OCI-LY7 (cell line): ENCODE measurements at regions of chr18 and their contacts with region 1.

Region 1: GRCh38 chr18:50356036-50356945 is 18.6 kb upstream of the SKA1 start:
- DNase-seq: peak; percentile 64
- H3K4me3 ChIP-seq: no peak overlapping the region
- H3K27ac ChIP-seq: peak overlapping the region; percentile 45
- H3K4me1 ChIP-seq: peaks cover 16% of the 10 kb centered on the region
- CTCF ChIP-seq: peak; percentile 53

Region 2: DNA sequence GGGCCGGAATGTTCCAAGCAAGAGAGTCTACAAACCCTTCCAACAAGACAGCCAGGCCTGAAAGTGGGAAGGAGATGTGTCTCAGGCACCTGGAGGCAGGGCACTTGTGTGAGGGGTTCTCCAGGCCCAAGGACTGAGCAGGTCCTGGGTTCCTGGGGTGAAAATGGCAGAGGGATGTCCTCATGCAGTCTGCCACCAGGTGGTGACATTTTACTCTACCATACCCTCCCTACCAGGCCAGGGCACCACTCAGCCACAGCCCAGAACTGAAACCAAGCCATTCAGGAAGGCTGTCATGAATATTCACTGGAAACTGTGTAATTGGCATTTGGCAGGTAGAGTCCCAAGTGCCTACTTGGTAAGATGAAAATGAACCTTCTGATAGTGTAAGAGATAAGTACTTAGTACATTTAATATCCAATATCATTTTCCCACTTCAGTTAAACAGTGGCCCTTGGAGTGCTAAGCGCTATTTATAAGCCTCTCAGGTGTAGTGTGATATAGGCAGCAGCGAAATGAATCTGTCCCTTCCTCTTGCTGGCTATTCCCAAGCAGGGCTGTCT is 346.4 kb before region 1 on chr18:
- CTCF ChIA-PET with region 1: no interaction called
- POLR2A ChIA-PET with region 1: no interaction called
- intact Hi-C with region 1: loop called (anchors 5 kb)
- DNase-seq: peak; percentile 36
- H3K4me3 ChIP-seq: no peak overlapping the region
- H3K27ac ChIP-seq: no peak overlapping the region
- H3K4me1 ChIP-seq: no peaks in the 10 kb centered on the region
- CTCF ChIP-seq: peak; percentile 65

Region 3: DNA sequence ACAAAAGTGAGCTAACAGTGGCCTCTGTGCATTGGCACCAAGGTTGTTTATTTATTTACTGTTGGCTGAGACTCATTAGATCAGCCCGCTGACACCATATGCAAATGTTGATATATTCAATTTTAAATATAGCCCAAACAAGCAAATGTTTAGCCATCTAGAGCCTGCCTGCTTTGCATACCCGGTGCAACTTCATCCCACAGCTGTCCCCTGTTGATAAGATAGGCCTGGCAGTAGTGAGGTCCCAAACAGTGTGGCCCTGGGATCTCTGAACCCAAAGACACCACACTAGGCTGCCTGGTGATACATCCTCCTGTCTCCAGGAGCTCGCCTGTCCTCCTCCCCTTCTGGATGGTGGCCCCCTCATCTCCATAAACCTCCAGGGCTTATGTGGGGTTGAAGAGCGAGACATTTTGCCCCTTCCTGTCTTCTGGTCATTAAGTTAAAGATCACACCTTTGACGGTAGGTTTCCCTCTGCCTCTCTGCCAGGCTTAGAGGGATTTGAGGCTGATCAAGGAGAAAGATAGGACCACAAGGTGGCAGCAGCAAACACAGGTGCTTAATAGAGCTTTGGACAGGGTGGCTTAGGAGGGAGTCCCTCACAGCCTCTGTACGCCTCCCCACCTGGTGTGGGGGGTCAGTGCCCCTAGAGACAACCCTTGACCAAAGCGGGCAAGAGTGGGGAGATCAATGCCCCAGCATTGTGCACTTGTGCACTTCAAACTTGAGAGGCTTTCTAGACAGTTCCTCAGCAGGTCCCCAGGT is 137.7 kb before region 1 on chr18:
- CTCF ChIA-PET with region 1: interaction called, 6 read pairs
- POLR2A ChIA-PET with region 1: interaction called, 4 read pairs
- intact Hi-C with region 1: loop called (anchors 1 kb)
- DNase-seq: peak; percentile 54
- H3K4me3 ChIP-seq: no peak overlapping the region
- H3K27ac ChIP-seq: no peak overlapping the region
- H3K4me1 ChIP-seq: no peaks in the 10 kb centered on the region
- CTCF ChIP-seq: peak; percentile 67

Region 4: DNA sequence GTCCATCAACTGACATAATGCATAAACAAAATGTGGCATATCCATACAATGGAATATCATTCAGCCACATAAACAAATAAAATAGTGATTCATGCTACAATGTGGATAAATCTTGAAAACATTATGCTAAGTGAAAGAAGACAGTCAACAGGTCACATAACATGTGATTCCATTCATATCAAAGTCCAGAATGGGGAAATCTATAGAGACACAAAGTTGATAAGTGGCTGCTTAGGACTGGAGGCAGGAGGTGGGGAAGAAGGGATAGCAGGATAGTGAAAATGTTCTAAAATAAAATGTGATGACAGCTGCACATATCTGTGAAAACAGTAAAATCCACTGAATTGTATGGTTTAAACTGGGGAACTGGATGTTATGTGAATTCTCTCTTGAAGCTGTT is 108.7 kb before region 1 on chr18:
- CTCF ChIA-PET with region 1: no interaction called
- POLR2A ChIA-PET with region 1: no interaction called
- intact Hi-C with region 1: no loop called
- DNase-seq: no peak
- H3K4me3 ChIP-seq: no peak overlapping the region
- H3K27ac ChIP-seq: no peak overlapping the region
- H3K4me1 ChIP-seq: no peaks in the 10 kb centered on the region
- CTCF ChIP-seq: no peak

Region 5: DNA sequence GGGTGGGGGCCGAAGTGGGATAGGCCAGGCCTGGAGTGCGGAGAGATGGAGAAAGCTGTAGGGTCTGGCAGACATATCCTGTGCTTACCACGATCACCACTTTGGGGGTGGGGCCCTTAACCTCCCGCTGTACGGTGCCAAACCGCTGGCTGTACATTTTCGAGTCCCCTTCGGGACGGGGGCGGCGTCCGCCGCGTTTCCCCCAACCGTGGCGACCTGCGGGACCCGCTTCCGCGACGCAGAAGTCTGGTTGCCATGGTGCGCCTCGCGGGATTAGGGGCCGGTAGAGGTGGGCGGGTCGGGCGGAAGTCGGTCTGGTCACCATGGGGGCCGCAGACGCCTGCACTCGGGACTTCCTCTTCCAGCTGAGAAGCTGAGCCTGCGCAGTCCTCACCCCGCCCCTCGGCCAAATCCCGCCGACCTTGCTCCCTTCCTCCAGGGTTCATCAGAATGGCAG is 90.0 kb before region 1 on chr18 and contains the start of gene CFAP53:
- CTCF ChIA-PET with region 1: interaction called, 5 read pairs
- POLR2A ChIA-PET with region 1: no interaction called
- intact Hi-C with region 1: loop called (anchors 5 kb)
- DNase-seq: peak; percentile 85
- H3K4me3 ChIP-seq: peak within 1 kb of the TSS; percentile 67
- H3K27ac ChIP-seq: no peak within 1 kb of the TSS
- H3K4me1 ChIP-seq: peaks cover 25% of the 10 kb centered on the region
- CTCF ChIP-seq: no peak
- total RNA-seq, gene CFAP53: 0.57 TPM in 1 of 2 replicates, not detected in the other

Region 6: DNA sequence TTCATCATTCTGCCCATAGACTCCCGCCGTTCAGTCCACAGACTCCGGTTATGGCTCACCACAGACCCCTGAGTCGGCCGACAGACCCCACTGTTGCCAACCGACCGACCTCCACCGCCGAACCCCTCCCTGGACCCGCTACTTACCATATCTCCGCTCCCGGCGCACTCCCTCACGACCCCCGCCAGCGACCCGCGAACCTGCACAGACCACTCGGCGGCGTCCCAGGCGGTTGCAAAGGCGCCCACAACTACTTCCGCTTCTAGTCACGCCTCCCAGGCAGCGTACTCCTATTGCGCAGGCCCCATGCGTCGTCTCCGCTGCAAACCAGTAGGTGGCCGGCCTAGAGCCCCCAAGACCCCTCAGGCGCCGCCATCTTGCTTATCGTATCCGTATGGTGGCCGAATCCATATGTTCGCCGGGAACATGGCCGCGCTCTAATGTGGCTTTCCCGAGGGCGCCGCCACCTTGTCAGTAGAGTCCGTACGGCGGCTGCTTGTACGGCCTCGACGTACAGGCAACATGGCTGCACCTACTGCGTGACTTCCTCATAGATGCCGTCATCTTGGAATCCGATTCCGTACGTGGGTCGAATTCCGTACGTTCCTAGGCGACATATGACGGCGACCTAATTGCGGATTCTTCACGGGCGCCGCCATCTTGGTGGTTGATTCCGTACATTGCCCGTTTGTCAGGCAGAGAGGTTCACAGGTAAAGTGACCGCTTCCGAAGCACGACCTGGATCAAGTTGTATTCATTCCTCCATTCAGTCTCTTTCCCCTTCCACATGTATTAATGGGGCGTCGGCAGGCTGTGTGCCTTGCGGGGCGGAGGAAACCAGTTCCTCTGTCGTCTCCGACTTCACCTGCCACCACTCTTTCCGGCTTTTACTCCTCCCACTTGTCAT is 68.6 kb before region 1 on chr18 and contains the start of gene CXXC1:
- CTCF ChIA-PET with region 1: no interaction called
- POLR2A ChIA-PET with region 1: interaction called, 3 read pairs
- intact Hi-C with region 1: loop called (anchors 1 kb)
- DNase-seq: peak; percentile 97
- H3K4me3 ChIP-seq: peak within 1 kb of the TSS; percentile 100
- H3K27ac ChIP-seq: peak within 1 kb of the TSS; percentile 55
- H3K4me1 ChIP-seq: no peaks in the 10 kb centered on the region
- CTCF ChIP-seq: peak; percentile 59
- total RNA-seq, gene CXXC1: 54.4 and 61.7 TPM in 2 replicates

Region 7: DNA sequence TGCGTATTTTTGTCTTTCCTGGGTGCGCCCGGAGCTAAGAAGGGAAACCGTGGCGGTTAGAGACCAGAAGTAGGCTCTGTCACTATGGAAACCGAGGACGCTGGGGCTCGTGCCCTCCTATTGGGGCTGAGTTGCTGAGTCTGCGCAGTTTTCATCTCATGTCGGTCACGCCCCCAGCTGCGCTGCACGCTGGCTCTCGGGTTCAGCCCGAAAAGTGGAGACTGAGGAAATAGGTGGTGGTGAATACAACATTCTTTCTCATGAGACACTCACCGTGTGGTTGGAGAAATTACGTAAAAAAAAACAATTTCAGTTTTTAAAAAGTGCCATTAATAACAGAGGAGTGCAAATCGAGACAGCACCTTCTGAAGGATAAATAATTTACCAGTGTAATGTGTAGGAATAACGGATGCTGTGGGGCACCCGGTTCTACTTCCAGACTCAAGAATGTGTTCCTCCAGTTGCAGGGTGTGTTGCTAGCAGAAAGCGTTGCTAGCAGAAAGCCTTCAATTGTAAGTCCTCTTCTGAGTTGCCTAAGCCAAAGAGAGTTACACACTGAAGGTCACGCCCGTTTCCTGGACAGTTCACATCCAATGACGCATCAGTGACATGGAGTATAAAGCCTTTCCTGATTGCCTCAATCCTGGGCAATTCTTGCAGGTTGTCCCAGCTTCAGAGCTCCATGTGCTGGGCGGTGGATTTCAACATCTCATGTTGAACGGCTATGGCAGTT is 48.4 kb before region 1 on chr18:
- CTCF ChIA-PET with region 1: no interaction called
- POLR2A ChIA-PET with region 1: interaction called, 10 read pairs
- intact Hi-C with region 1: loop called (anchors 5 kb)
- DNase-seq: peak; percentile 96
- H3K4me3 ChIP-seq: peak overlapping the region; percentile 55
- H3K27ac ChIP-seq: peak overlapping the region; percentile 80
- H3K4me1 ChIP-seq: peaks cover 40% of the 10 kb centered on the region
- CTCF ChIP-seq: no peak